ENCODE measurements at regions of chr17 and their contacts with region 1.

Region 1: GRCh38 chr17:35540589-35541404 is 3.3 kb upstream of the SLFN12L start:
- DNase-seq: peak in 1 of 2 donors; percentile 82
- ATAC-seq: no peak
- H3K4me3 ChIP-seq: no peak overlapping the region
- H3K27ac ChIP-seq: no peak overlapping the region
- H3K4me1 ChIP-seq: peaks cover 0 to 3% of the 10 kb centered on the region in 2 donors
- H3K27me3 ChIP-seq: no peaks in the 10 kb centered on the region

Region 2: DNA sequence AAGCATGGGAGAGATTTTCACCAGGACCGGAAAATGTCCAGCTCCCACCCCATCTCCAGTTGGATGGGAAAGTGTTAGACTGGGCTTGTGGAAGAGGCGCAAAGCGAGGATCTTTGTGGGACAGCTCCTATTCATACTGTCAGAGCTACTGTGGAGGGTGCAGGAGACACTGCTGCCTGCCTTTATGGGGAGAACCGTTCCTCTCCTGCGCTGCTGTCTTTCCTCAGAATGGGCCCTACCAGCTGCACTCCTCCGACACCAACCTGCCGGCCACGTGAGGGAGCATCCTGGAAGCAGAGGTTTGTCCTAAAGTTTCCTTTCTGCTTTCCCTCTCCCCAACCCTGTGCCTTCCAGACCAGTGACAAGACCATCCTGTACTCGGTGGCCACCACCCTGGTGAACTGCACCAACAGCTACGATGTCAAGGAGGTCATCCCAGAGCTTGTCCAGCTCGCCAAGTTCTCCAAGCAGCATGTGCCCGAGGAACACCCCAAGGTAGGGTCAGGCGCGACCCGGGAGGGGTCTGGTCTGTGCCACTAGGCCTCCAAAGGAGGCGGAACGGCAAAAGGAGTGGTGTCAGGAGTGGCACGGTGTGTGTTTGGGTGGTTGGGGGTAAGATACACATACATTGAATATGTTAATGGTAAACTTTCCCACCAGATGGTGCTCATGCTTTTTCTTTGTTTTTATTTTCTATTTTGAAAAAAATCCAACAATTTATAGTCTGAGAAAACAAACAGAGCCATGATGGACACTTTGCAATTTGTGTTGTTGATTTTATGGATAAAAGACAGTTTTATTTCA is 369.6 kb before region 1 on chr17:
- intact Hi-C with region 1: loop called (anchors 5 kb)
- DNase-seq: peak in 1 of 2 donors; percentile 65
- ATAC-seq: no peak
- H3K4me3 ChIP-seq: no peak overlapping the region
- H3K27ac ChIP-seq: no peak overlapping the region
- H3K4me1 ChIP-seq: no peaks in the 10 kb centered on the region
- H3K27me3 ChIP-seq: no peaks in the 10 kb centered on the region

Region 3: GRCh38 chr17:35312790-35313711 is 227.7 kb before region 1 on chr17:
- intact Hi-C with region 1: loop called in 1 of 2 experiments (anchors 5 kb)
- DNase-seq: peak in 1 of 2 donors; percentile 70
- ATAC-seq: peak; percentile 93
- H3K4me3 ChIP-seq: peak overlapping the region in 1 of 2 donors; percentile 38
- H3K27ac ChIP-seq: no peak overlapping the region
- H3K4me1 ChIP-seq: no peaks in the 10 kb centered on the region
- H3K27me3 ChIP-seq: no peaks in the 10 kb centered on the region

Region 4: GRCh38 chr17:35432176-35433074 is 108.4 kb before region 1 on chr17 and contains the start of gene SLFN12:
- intact Hi-C with region 1: no loop called
- DNase-seq: peak in 1 of 2 donors; percentile 77
- ATAC-seq: peak; percentile 95
- H3K4me3 ChIP-seq: peak within 1 kb of the TSS; percentile 66 to 100
- H3K27ac ChIP-seq: peak within 1 kb of the TSS; percentile 63 to 72
- H3K4me1 ChIP-seq: peaks cover 0 to 7% of the 10 kb centered on the region in 2 donors
- H3K27me3 ChIP-seq: no peaks in the 10 kb centered on the region
- total RNA-seq, gene SLFN12: 19.5 to 20.8 TPM

Region 5: DNA sequence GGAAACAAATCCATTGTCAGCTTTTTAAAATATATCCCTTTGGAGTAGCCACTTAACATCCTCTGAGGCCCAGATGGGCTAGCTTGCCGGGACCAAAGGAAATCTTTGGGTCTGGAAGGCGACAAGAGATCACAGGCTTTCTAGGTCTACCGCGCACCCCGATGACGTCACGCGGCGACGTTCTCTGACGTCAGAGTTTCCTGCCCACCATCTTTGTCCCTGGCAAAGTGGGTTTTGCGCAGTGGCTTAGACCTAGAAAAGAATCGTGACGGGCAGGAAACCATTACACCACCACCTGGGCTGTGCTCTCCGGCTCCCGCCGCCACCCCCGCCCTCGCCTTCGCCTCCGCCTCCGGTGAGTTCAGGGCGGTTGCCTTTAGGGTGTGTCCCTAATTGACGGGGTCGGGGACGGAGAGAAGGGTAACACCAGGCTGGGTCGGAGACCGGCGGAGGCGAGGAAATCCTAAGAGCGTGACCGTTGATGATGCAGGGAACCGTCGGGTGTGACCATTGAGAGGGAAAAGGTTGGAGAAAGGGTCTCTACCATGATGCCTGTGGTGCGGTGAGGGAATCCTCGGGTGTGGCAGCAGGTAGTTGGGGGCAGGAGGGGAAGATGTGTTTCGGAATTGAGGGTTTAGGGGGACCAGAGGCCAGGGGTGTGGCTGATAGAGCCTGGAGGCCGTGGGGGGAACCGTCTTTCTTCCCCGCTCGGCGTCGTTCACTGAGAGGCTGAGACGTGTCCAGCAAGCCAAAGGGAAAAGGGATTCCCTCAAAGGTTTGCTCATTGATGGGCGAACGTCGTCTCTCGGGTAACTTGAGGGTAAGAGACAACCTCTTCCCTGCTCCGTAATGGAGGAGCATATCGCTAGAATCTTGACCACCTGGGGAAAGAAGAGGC is 46.5 kb after region 1 on chr17 and contains the start of gene AP2B1:
- intact Hi-C with region 1: no loop called
- DNase-seq: peak; percentile 94 to 97
- ATAC-seq: peak; percentile 96
- H3K4me3 ChIP-seq: peak within 1 kb of the TSS; percentile 43 to 86
- H3K27ac ChIP-seq: peak within 1 kb of the TSS in 1 of 2 donors; percentile 62
- H3K4me1 ChIP-seq: no peaks in the 10 kb centered on the region
- H3K27me3 ChIP-seq: no peaks in the 10 kb centered on the region
- total RNA-seq, gene AP2B1: 107 to 120 TPM